ENCODE measurements at regions of chr10 and their contacts with region 1.

Region 1: DNA sequence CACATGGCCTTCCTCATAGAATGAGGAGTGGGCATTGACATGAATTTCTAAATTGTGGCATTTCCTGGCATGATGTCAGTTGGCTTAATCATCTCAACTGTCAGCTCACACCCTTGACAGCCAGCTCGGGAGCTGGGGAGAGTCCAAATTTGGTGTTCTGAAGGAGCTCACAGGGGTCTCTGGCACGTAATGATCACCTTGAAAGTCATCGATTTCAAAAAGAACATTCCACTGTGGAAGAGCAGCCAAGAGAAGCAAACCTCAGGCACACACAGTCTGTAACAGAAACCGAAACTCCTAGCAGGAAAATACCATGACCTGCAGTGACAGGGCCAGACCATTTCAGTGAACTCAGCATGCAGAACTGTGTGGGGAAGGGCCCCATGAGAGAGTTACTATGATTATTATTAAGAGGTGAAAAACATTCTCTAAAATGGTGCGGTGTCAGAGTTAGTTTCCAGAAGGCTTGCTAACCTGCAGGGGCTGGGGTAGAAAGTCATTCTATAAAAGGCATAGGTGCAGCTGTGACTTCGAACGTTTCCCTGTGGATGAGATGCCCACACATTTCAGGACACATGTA is 26.4 kb upstream of the KLF6 start:
- DNase-seq: peak; percentile 64 to 97 (median 79)
- H3K4me3 ChIP-seq: peak overlapping the region in 2 of 3 experiments; percentile 22 to 23
- H3K4me3 Mint-ChIP-seq: peak overlapping the region; percentile 0 to 84
- H3K27ac ChIP-seq: peak overlapping the region; percentile 70 to 84
- H3K27ac Mint-ChIP-seq: peak overlapping the region; percentile 94 to 99 (median 97)
- H3K4me1 ChIP-seq: peaks cover 34 to 36% of the 10 kb centered on the region in 2 donors
- H3K4me1 Mint-ChIP-seq: peaks cover 25% of the 10 kb centered on the region
- H3K27me3 ChIP-seq: no peaks in the 10 kb centered on the region
- H3K27me3 Mint-ChIP-seq: no peaks in the 10 kb centered on the region
- CTCF ChIP-seq: no peak

Region 2: GRCh38 chr10:2714597-2714996 is 1096.8 kb before region 1 on chr10:
- intact Hi-C with region 1: no loop called
- DNase-seq: no peak
- H3K4me3 ChIP-seq: no peak overlapping the region
- H3K4me3 Mint-ChIP-seq: no peak overlapping the region
- H3K27ac ChIP-seq: no peak overlapping the region
- H3K27ac Mint-ChIP-seq: no peak overlapping the region
- H3K4me1 ChIP-seq: no peaks in the 10 kb centered on the region
- H3K4me1 Mint-ChIP-seq: no peaks in the 10 kb centered on the region
- H3K27me3 ChIP-seq: no peaks in the 10 kb centered on the region
- H3K27me3 Mint-ChIP-seq: peaks cover 0 to 3% (median 0%) of the 10 kb centered on the region in 3 donors
- CTCF ChIP-seq: no peak

Region 3: GRCh38 chr10:3785257-3785850 is 26.0 kb before region 1 on chr10:
- intact Hi-C with region 1: no loop called
- DNase-seq: peak; percentile 98 to 99 (median 99)
- H3K4me3 ChIP-seq: peak overlapping the region; percentile 94 to 99 (median 95)
- H3K4me3 Mint-ChIP-seq: peak overlapping the region; percentile 88 to 94
- H3K27ac ChIP-seq: peak overlapping the region; percentile 95 to 99
- H3K27ac Mint-ChIP-seq: peak overlapping the region; percentile 94 to 99 (median 98)
- H3K4me1 ChIP-seq: peaks cover 27 to 29% of the 10 kb centered on the region in 2 donors
- H3K4me1 Mint-ChIP-seq: peaks cover 32% of the 10 kb centered on the region
- H3K27me3 ChIP-seq: no peaks in the 10 kb centered on the region
- H3K27me3 Mint-ChIP-seq: peaks cover 1 to 8% (median 3%) of the 10 kb centered on the region in 3 donors
- CTCF ChIP-seq: no peak

Region 4: GRCh38 chr10:3797750-3798149 is 13.6 kb before region 1 on chr10:
- intact Hi-C with region 1: no loop called
- DNase-seq: no peak
- H3K4me3 ChIP-seq: no peak overlapping the region
- H3K4me3 Mint-ChIP-seq: no peak overlapping the region
- H3K27ac ChIP-seq: no peak overlapping the region
- H3K27ac Mint-ChIP-seq: no peak overlapping the region
- H3K4me1 ChIP-seq: peaks cover under 1 to 3% of the 10 kb centered on the region in 2 donors
- H3K4me1 Mint-ChIP-seq: peaks cover 2% of the 10 kb centered on the region
- H3K27me3 ChIP-seq: no peaks in the 10 kb centered on the region
- H3K27me3 Mint-ChIP-seq: peaks cover 0 to 3% (median 1%) of the 10 kb centered on the region in 3 donors
- CTCF ChIP-seq: no peak

Region 5: DNA sequence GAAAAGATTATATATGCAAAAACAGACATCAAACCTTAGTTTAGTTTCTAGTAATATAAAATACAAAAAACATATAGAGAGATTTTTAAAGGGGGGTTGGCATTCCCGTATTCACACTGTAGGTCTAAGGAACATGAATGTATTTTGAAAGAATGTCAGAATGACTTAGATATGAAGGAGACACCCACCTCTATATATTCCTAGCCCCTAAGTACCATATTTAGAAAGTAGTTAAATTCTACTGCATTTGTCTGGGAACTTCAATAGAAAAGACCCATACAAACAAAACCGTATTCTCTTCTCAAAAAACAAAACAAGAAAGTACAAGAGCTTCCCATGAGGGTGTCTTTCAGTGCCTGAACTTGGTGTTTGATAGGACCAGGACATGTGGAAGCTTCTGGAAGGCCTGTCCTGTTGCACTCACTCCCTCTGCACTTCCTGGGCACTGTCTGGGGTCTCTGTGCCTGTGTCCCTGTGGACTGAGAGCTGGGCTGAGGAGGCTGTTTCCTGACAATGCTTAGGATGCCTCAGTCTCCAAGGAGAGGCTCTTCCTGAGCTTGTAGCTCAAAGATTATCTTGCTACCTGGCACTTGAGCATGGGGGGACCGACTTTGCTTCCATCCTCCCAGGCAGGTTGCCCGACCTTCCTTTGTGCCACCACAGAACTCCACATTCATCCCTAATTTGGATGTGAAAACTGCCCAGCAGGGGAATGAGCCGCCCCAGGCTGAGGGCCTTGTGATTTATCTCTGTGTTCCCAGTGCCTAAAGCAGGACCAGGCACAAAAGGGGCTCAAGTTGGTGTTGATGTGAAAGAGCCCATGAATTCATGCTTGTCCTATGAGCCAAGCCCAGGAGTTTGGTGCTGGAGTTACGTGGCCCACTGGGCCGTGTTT is 18.0 kb after region 1 on chr10:
- intact Hi-C with region 1: loop called in 1 of 2 experiments (anchors 2 kb)
- DNase-seq: no peak
- H3K4me3 ChIP-seq: peak overlapping the region; percentile 40 to 74 (median 62)
- H3K4me3 Mint-ChIP-seq: peak overlapping the region; percentile 64 to 75
- H3K27ac ChIP-seq: peak overlapping the region in 1 of 2 donors; percentile 86
- H3K27ac Mint-ChIP-seq: peak overlapping the region; percentile 83 to 93 (median 87)
- H3K4me1 ChIP-seq: peaks cover 20 to 24% of the 10 kb centered on the region in 2 donors
- H3K4me1 Mint-ChIP-seq: peaks cover 26% of the 10 kb centered on the region
- H3K27me3 ChIP-seq: no peaks in the 10 kb centered on the region
- H3K27me3 Mint-ChIP-seq: peaks cover 1 to 2% (median 2%) of the 10 kb centered on the region in 3 donors
- CTCF ChIP-seq: no peak

Region 6: GRCh38 chr10:3873728-3874461 is 62.5 kb after region 1 on chr10:
- intact Hi-C with region 1: loop called in 1 of 2 experiments (anchors 2 kb)
- DNase-seq: peak; percentile 92 to 99 (median 95)
- H3K4me3 ChIP-seq: no peak overlapping the region
- H3K4me3 Mint-ChIP-seq: peak overlapping the region in 1 of 2 donors; percentile 67
- H3K27ac ChIP-seq: peak overlapping the region; percentile 58 to 91
- H3K27ac Mint-ChIP-seq: peak overlapping the region; percentile 93 to 99 (median 97)
- H3K4me1 ChIP-seq: peaks cover 52 to 62% of the 10 kb centered on the region in 2 donors
- H3K4me1 Mint-ChIP-seq: peaks cover 49% of the 10 kb centered on the region
- H3K27me3 ChIP-seq: no peaks in the 10 kb centered on the region
- H3K27me3 Mint-ChIP-seq: peaks cover 0 to 1% (median 0%) of the 10 kb centered on the region in 3 donors
- CTCF ChIP-seq: no peak

Region 7: DNA sequence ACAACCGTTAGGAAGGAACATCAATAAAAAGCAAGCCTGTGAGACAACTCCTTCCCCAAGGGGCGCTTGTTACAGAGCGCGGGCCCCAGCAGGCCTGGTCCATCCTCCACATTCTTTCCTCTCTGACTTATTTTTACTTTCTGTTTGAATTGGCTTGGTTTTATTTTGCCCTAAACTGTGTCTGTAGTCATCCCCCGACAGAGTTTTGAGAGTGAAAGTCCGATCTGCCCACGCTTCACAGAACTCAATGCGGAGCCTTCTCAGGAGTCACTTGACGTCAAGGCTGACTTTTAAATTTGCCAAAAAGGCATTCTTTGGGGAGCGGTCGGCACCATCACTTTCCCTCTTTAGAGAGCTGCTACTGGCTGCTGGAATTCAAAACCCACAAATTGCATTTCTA is 123.8 kb after region 1 on chr10:
- intact Hi-C with region 1: no loop called
- DNase-seq: no peak
- H3K4me3 ChIP-seq: no peak overlapping the region
- H3K4me3 Mint-ChIP-seq: no peak overlapping the region
- H3K27ac ChIP-seq: no peak overlapping the region
- H3K27ac Mint-ChIP-seq: no peak overlapping the region
- H3K4me1 ChIP-seq: no peaks in the 10 kb centered on the region
- H3K4me1 Mint-ChIP-seq: peaks cover 7% of the 10 kb centered on the region
- H3K27me3 ChIP-seq: no peaks in the 10 kb centered on the region
- H3K27me3 Mint-ChIP-seq: peaks cover 0 to 2% (median 0%) of the 10 kb centered on the region in 3 donors
- CTCF ChIP-seq: no peak

Measured in CD14-positive monocyte (primary cell).